ENCODE measurements at regions of chr14 and their contacts with region 1.

Region 1: GRCh38 chr14:68530443-68530842 is 262.4 kb downstream of the ZFP36L1 start:
- DNase-seq: no peak
- ATAC-seq: no peak
- H3K4me3 ChIP-seq: no peak overlapping the region
- H3K4me3 Mint-ChIP-seq: no peak overlapping the region
- H3K27ac ChIP-seq: no peak overlapping the region
- H3K27ac Mint-ChIP-seq: no peak overlapping the region
- H3K4me1 ChIP-seq: no peaks in the 10 kb centered on the region
- H3K4me1 Mint-ChIP-seq: peaks cover 0 to 11% (median 3%) of the 10 kb centered on the region in 3 donors
- H3K27me3 ChIP-seq: no peaks in the 10 kb centered on the region
- H3K27me3 Mint-ChIP-seq: no peaks in the 10 kb centered on the region

Region 2: DNA sequence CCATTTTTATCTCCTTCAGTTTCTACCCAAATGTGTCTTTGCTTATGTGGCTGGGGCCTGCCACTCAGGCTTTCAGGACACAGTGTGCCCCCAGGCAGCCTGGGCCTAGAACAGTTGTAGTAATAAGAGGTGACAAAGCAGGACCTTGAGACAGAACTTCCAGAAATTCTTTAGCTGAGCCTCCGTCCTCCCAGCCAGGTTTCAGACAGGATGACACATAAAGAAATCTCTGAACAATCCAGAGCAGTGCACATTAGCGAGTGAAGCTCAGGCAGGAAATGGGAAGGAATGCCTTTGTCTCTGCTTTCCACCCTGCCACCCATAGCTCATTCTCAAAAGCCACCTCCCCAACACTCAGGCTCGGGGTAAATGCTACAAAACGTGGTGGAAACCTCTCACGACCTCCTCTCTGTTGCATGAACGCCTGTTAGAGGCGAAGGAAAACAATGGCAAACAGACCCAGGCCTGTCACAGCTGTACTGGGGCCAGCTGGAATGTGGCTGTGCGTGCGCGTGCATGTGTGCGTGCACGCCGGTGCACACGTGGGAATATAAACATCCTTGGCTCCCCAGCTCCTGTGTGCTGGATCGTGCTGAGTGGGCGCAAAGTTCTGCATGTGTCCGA is 24.3 kb before region 1 on chr14:
- CTCF ChIA-PET with region 1: no interaction called
- POLR2A ChIA-PET with region 1: interaction called in 1 of 2 experiments, 12 read pairs
- DNase-seq: no peak
- ATAC-seq: no peak
- H3K4me3 ChIP-seq: no peak overlapping the region
- H3K4me3 Mint-ChIP-seq: peak overlapping the region; percentile 35 to 64 (median 40)
- H3K27ac ChIP-seq: peak overlapping the region; percentile 76
- H3K27ac Mint-ChIP-seq: peak overlapping the region; percentile 88 to 93
- H3K4me1 ChIP-seq: peaks cover 47 to 75% of the 10 kb centered on the region in 2 experiments
- H3K4me1 Mint-ChIP-seq: peaks cover 67 to 87% (median 84%) of the 10 kb centered on the region in 3 donors
- H3K27me3 ChIP-seq: peaks cover 0 to 4% of the 10 kb centered on the region in 2 experiments
- H3K27me3 Mint-ChIP-seq: no peaks in the 10 kb centered on the region

Measured in T-cell (primary cell).